GM13976 (cell line): ENCODE measurements at regions of chr10 and their contacts with region 1.

Region 1: DNA sequence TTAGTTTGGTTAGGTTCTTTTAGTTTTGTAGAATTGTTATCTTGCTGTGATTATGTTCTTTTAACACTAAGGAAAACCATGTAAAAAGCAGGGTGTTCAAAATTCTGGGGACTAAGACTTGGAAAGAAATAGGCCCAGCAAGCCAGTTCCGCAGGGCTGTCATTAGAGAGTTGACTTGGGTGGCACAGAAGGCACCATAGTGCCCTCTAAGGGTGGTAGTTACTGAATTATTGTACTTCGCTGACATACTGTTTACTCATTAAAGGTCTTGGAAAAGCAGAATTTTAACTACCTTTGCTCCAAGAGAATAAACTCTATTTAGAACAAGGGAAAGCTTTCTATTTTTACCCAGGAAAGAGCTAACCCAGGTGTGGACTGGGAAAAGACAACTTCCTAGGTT is 86.5 kb downstream of the OTUD1 start:
- DNase-seq: peak; percentile 11
- CTCF ChIP-seq: no peak

Region 2: DNA sequence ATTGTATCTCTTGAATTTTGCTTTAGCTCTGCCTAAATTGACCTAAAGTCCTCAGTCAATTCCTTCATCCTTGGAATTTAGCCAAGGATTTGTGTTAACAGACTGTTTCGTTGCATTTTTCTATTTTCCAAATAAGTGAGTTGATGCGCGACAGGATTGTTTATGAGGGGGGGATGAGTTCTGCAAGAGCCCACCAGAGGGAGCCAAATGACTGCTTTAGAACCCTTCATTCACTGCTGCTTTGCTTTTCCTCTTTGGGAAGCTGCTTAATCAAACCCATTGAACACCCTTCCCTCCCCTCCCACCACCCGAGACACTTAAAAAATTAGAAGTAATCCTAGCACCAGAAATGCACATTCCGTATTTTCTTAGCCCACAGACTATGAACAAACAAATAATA is 367.0 kb before region 1 on chr10:
- in situ Hi-C with region 1: loop called (anchors 25 kb)
- DNase-seq: peak; percentile 84
- CTCF ChIP-seq: peak; percentile 77

Region 3: GRCh38 chr10:23314835-23315239 is 210.6 kb before region 1 on chr10:
- in situ Hi-C with region 1: loop called (anchors 5 kb)
- DNase-seq: peak; percentile 52
- CTCF ChIP-seq: peak; percentile 29

Region 4: GRCh38 chr10:23344241-23344841 is 181.1 kb before region 1 on chr10 and contains the start of gene C10orf67:
- in situ Hi-C with region 1: no loop called
- DNase-seq: peak; percentile 36
- CTCF ChIP-seq: no peak

Region 5: DNA sequence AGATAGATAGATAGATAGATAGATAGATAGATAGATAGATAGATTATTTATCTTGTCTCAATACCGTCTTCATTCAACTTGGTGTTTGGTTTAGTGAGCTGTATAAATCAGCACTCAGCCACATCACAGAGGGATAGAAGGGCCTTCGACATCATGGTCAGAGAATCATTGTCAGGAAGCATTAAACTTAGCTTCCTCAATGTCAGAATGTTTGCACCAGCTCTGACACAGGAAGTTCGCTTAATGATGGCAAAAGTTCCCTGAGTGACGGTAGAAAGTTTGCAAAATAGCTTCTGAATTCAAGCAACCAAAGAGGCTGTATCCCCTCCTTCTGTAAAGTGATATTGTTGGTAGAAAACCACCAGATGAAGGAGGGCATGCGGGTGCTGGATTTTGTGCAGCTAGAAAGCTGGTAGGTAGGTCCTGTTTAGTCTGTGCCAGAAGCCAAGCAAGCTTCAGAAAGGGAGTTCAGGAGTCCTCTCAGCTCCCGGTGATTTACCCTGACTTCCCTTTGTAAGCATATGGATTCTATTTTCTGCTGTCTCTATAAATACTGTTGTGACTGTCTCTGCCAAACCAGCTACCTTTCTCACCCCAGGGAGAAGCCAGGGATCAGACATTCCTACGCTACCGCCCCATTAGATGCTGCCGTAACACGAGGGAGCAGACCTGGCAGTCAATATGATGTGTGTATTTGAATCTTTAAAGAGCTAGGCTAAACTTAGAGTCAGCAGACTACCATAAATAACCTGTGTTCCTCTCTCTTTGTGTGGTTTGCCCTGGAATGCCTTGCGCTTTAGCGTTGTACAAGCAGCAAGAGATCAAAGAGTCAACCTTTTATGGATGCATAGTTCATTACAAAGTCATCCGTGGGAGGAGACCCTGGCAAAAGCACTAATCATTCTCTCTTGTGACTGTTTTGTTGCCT is 483.0 kb after region 1 on chr10:
- in situ Hi-C with region 1: no loop called
- DNase-seq: no peak
- CTCF ChIP-seq: no peak

Region 6: GRCh38 chr10:24882047-24882698 is 1356.8 kb after region 1 on chr10:
- in situ Hi-C with region 1: no loop called
- DNase-seq: no peak
- CTCF ChIP-seq: no peak